Activated B cell treated with CpG ODN at 0.5 μM for 24 hours (primary cell): ENCODE measurements at regions of chr5 and their contacts with region 1.

Region 1: DNA sequence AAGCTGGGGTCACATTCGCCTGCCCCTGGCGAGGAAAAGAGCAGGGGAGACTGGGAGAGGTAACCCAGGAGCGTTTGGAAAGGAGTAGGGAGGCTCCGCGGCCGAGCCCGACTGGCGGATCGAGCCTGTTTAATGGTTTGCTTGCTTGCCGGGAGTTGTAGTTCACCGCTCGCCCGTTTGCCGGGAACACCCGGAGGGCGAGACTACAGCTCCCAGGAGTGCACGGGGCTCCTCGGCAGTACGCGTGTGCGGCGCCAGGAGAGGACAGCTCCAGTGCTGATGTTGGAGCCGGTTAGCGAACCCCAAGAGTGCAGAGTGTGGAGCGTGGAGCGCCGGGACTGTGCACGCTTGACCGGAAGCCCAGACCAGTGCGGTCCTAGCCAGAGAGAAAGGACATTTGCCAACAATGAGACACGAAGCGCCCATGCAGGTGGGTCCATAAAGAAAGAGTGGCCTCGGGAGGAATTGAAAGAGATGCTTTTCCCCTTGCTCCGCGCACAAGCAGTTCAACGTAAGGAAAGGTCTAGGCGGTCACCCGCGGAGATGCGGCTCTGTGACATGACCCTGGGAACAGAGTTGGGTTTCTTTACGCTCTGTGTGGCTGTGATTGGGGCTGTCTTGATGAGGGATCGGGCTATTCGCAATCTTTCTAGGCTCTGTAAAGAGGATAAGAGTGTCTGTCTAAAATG is at the start of gene RAB3C:
- DNase-seq: peak; percentile 68
- ATAC-seq: peak; percentile 100
- H3K4me3 Mint-ChIP-seq: peak within 1 kb of the TSS; percentile 97
- H3K27ac Mint-ChIP-seq: peak within 1 kb of the TSS; percentile 27
- H3K4me1 Mint-ChIP-seq: peaks cover 25% of the 10 kb centered on the region
- H3K27me3 Mint-ChIP-seq: peaks cover 37% of the 10 kb centered on the region
- CTCF ChIP-seq: no peak
- total RNA-seq, gene RAB3C: 0.47 TPM in 1 of 2 replicates, not detected in the other

Region 2: GRCh38 chr5:57779383-57780223 is 803.3 kb before region 1 on chr5:
- CTCF ChIA-PET with region 1: no interaction called
- POLR2A ChIA-PET with region 1: no interaction called
- intact Hi-C with region 1: loop called (anchors 10 kb)
- DNase-seq: no peak
- ATAC-seq: peak; percentile 31
- H3K4me3 Mint-ChIP-seq: no peak overlapping the region
- H3K27ac Mint-ChIP-seq: no peak overlapping the region
- H3K4me1 Mint-ChIP-seq: no peaks in the 10 kb centered on the region
- H3K27me3 Mint-ChIP-seq: peaks cover 2% of the 10 kb centered on the region
- CTCF ChIP-seq: no peak

Region 3: GRCh38 chr5:58477760-58478376 is 105.1 kb before region 1 on chr5:
- CTCF ChIA-PET with region 1: interaction called, 13 read pairs
- POLR2A ChIA-PET with region 1: no interaction called
- intact Hi-C with region 1: no loop called
- DNase-seq: no peak
- ATAC-seq: peak; percentile 28
- H3K4me3 Mint-ChIP-seq: peak overlapping the region; percentile 4
- H3K27ac Mint-ChIP-seq: no peak overlapping the region
- H3K4me1 Mint-ChIP-seq: peaks cover 22% of the 10 kb centered on the region
- H3K27me3 Mint-ChIP-seq: no peaks in the 10 kb centered on the region
- CTCF ChIP-seq: peak; percentile 23

Region 4: GRCh38 chr5:58491216-58491892 is 91.6 kb before region 1 on chr5 and contains the start of gene GAPT:
- CTCF ChIA-PET with region 1: no interaction called
- POLR2A ChIA-PET with region 1: no interaction called
- intact Hi-C with region 1: loop called (anchors 1 kb)
- DNase-seq: no peak
- ATAC-seq: peak; percentile 87
- H3K4me3 Mint-ChIP-seq: peak within 1 kb of the TSS; percentile 82
- H3K27ac Mint-ChIP-seq: peak within 1 kb of the TSS; percentile 95
- H3K4me1 Mint-ChIP-seq: peaks cover 66% of the 10 kb centered on the region
- H3K27me3 Mint-ChIP-seq: no peaks in the 10 kb centered on the region
- CTCF ChIP-seq: no peak
- total RNA-seq, gene GAPT: 39.8 and 40.3 TPM in 2 replicates

Region 5: GRCh38 chr5:58505971-58506640 is 76.8 kb before region 1 on chr5:
- CTCF ChIA-PET with region 1: no interaction called
- POLR2A ChIA-PET with region 1: interaction called, 5 read pairs
- intact Hi-C with region 1: loop called (anchors 2 kb)
- DNase-seq: no peak
- ATAC-seq: peak; percentile 87
- H3K4me3 Mint-ChIP-seq: peak overlapping the region; percentile 62
- H3K27ac Mint-ChIP-seq: peak overlapping the region; percentile 78
- H3K4me1 Mint-ChIP-seq: peaks cover 80% of the 10 kb centered on the region
- H3K27me3 Mint-ChIP-seq: no peaks in the 10 kb centered on the region
- CTCF ChIP-seq: no peak

Region 6: DNA sequence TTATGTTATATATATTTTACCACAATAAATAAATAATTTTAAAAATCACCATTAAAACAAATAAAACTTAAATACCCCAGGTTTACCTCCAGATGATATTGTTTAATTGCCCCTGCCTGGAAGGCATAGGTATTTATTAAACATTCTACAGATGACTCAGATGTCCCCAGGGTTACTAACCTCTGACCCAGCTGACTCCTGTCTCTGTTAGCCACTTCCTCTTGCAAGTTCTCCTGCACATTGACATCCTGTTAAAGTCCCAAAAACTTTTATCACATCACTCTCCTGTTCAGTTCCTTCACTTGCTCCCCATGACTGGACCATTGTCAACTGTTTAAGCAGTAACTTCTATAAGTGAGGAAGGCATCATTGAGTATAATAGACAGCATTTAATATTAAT is 37.0 kb before region 1 on chr5:
- CTCF ChIA-PET with region 1: no interaction called
- POLR2A ChIA-PET with region 1: no interaction called
- intact Hi-C with region 1: loop called (anchors 1 kb)
- DNase-seq: no peak
- ATAC-seq: peak; percentile 96
- H3K4me3 Mint-ChIP-seq: peak overlapping the region; percentile 11
- H3K27ac Mint-ChIP-seq: no peak overlapping the region
- H3K4me1 Mint-ChIP-seq: peaks cover 40% of the 10 kb centered on the region
- H3K27me3 Mint-ChIP-seq: no peaks in the 10 kb centered on the region
- CTCF ChIP-seq: no peak

Region 7: GRCh38 chr5:58751222-58751837 is 168.4 kb after region 1 on chr5:
- CTCF ChIA-PET with region 1: no interaction called
- POLR2A ChIA-PET with region 1: no interaction called
- intact Hi-C with region 1: no loop called
- DNase-seq: no peak
- ATAC-seq: no peak
- H3K4me3 Mint-ChIP-seq: no peak overlapping the region
- H3K27ac Mint-ChIP-seq: no peak overlapping the region
- H3K4me1 Mint-ChIP-seq: no peaks in the 10 kb centered on the region
- H3K27me3 Mint-ChIP-seq: no peaks in the 10 kb centered on the region
- CTCF ChIP-seq: no peak

Region 8: DNA sequence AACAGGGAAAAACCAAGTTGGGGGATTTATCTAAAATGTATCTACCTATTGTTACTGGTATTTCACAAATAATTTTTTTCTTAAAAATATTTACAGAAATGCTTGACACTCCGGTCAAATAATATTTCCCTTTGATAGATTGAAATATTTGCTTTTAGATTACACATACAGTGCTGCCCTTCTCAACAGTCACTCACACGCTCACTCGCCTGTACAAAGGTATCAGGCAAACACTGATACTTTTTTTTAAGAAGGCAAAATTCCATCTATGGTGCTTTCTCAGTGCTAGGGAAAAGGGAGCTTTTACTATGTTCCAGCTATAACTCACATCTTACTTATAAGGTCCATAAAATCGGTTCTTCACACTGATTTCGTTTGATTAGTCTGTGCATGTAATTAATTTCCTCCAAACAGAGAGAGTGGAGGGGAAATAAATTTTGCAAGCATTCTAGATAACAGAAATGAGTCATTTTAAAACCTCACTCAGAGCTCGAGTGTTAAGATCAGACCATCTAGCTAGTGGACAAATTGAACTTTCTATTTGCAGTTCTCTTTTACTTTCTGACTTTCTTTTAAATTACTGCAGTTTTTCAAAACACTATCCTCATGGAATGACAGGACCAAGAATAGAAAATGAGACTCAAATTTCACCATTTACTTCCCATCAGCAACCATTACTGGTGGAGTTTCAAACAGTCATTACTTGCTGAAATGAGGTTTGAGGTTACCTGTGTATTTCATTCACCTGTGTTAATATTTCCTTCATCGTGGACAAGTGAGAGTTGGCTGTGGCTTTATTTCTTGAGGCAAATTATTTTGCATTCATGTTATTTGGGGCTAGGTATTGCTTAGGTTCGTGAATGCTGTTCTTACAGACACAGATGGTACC is 273.1 kb after region 1 on chr5:
- CTCF ChIA-PET with region 1: no interaction called
- POLR2A ChIA-PET with region 1: no interaction called
- intact Hi-C with region 1: no loop called
- DNase-seq: no peak
- ATAC-seq: no peak
- H3K4me3 Mint-ChIP-seq: no peak overlapping the region
- H3K27ac Mint-ChIP-seq: no peak overlapping the region
- H3K4me1 Mint-ChIP-seq: no peaks in the 10 kb centered on the region
- H3K27me3 Mint-ChIP-seq: peaks cover 8% of the 10 kb centered on the region
- CTCF ChIP-seq: no peak

Region 9: DNA sequence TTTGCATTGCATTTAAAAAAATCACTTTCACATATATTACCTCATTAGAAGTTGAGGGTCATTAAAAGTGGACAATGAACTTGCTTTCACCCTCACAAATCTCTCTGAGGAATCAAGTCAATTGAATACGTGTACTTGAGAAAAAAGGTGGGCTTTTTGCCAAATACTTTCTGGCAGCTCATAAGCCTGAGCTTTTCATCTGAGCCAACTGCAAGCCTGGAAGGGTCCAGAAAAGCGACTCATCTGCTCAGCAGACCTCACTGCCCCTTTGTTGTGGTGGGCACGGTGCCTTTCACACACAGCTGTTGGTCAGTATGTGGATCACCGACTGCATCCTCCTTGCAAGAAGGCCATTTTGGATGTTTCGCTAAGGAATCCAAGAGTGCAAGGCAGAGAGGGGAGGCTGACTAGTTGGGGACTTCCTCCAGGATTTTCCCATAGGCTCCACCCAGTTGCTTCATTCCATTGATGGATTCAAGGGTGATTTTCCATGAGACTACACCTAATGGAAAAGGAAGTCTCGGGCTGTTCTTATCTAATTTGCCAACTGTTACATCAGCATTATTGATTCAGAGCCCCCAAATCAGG is 745.9 kb after region 1 on chr5:
- CTCF ChIA-PET with region 1: no interaction called
- POLR2A ChIA-PET with region 1: no interaction called
- intact Hi-C with region 1: no loop called
- DNase-seq: no peak
- ATAC-seq: no peak
- H3K4me3 Mint-ChIP-seq: no peak overlapping the region
- H3K27ac Mint-ChIP-seq: no peak overlapping the region
- H3K4me1 Mint-ChIP-seq: no peaks in the 10 kb centered on the region
- H3K27me3 Mint-ChIP-seq: no peaks in the 10 kb centered on the region
- CTCF ChIP-seq: no peak